ENCODE measurements at regions of chr12 and their contacts with region 1.

Region 1: DNA sequence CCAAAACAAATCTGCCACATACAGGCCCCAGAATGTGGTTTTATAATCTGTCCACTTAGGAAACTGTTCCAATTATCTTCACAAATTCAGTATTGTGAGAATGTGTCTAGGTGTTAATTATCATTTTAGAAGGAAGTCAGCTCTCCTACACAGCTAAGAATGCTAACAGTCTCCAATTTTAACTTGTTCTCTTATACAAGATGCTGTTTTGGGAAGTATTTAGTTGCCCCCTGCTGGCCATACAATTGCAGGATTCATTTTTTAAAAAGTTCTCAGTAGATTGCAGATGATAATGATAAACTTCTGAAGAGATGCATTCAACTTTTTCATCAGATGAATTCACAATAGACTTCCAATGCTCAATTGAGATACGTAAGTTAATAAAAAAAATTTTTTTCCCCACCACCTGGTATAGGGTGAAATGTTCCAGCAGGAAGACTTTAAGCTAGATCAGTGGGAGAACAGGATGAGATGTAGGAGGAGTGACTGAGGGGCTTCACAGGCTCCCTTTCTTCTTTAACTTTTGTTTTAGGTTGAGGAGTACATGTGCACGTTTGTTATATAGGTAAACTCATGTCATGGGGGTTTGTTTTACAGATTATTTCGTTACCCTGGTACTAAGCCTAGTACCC is 27.3 kb upstream of the OSBPL8 start:
- DNase-seq: peak; percentile 60
- ATAC-seq: peak; percentile 43
- H3K4me3 ChIP-seq: no peak overlapping the region
- H3K27ac ChIP-seq: no peak overlapping the region
- H3K4me1 ChIP-seq: peaks cover 6% of the 10 kb centered on the region
- H3K27me3 ChIP-seq: no peaks in the 10 kb centered on the region
- CTCF ChIP-seq: peak; percentile 89

Region 2: DNA sequence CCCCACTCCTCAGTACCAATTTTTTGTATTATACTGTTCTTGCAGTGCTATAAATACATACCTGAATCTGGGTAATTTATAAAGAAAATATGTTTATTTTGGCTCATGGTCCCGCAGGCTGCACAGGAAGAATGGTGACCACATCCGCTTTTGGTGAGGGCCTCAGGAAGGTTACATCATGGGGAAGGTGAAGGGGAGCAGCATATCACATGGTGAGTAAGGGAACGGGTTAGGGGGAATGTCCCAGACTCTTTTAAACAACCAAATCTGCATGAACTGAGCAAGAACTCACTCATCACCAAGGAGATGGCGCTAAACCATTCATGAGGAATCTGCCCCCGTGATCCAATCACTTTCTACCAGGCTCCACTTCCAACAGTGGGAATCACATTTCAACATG is 67.3 kb before region 1 on chr12:
- CTCF ChIA-PET with region 1: no interaction called
- POLR2A ChIA-PET with region 1: no interaction called
- intact Hi-C with region 1: loop called (anchors 5 kb)
- DNase-seq: peak; percentile 5
- ATAC-seq: no peak
- H3K4me3 ChIP-seq: no peak overlapping the region
- H3K27ac ChIP-seq: no peak overlapping the region
- H3K4me1 ChIP-seq: no peaks in the 10 kb centered on the region
- H3K27me3 ChIP-seq: no peaks in the 10 kb centered on the region
- CTCF ChIP-seq: no peak